BJ (cell line): ENCODE measurements at regions of chr4 and their contacts with region 1.

Region 1: GRCh38 chr4:48329976-48330375 is 11.4 kb upstream of the SLAIN2 start:
- DNase-seq: peak; percentile 76
- H3K4me3 ChIP-seq: no peak overlapping the region
- H3K27me3 ChIP-seq: no peaks in the 10 kb centered on the region
- CTCF ChIP-seq: no peak

Region 2: GRCh38 chr4:48795108-48795507 is 465.1 kb after region 1 on chr4:
- CTCF ChIA-PET with region 1: no interaction called
- POLR2A ChIA-PET with region 1: interaction called, 11 read pairs
- DNase-seq: no peak
- H3K4me3 ChIP-seq: no peak overlapping the region
- H3K27me3 ChIP-seq: no peaks in the 10 kb centered on the region
- CTCF ChIP-seq: no peak